Head of caudate nucleus (tissue), 42 donors: ENCODE measurements at regions of chr5 and their contacts with region 1.

Region 1: DNA sequence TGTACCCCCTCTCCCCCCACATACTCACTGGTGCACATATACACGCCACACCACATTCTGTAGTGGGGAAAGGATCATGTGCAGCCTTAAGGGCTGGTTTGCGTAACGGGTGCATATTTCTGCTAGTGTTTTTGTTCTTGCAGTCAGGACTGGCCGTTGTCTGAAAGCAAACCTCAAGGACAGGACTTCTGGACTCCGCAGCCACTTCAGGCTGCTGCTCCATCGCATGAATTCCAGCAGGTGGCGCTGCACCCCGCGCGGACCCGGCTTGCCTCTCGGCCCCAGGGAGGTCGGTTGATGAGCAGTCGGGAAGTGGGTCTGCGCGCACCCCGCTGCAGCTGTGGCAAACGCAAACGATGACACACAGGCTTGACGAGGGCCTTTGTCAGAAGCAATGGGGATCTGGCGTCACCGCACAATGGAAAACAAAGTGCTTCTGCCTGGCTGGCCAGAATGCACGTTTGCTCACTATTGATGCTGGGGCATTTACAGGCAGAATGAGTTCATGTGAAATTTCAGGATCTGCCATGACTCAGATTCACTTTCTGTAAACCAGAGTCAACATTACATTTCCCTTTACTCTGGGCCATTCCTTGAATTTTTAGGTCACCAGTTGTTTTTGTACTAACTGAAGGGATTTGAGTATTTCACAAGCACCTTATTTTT is 36.3 kb upstream of the GLRX start:
- DNase-seq: peak; percentile 88 to 98 (median 95)

Region 2: DNA sequence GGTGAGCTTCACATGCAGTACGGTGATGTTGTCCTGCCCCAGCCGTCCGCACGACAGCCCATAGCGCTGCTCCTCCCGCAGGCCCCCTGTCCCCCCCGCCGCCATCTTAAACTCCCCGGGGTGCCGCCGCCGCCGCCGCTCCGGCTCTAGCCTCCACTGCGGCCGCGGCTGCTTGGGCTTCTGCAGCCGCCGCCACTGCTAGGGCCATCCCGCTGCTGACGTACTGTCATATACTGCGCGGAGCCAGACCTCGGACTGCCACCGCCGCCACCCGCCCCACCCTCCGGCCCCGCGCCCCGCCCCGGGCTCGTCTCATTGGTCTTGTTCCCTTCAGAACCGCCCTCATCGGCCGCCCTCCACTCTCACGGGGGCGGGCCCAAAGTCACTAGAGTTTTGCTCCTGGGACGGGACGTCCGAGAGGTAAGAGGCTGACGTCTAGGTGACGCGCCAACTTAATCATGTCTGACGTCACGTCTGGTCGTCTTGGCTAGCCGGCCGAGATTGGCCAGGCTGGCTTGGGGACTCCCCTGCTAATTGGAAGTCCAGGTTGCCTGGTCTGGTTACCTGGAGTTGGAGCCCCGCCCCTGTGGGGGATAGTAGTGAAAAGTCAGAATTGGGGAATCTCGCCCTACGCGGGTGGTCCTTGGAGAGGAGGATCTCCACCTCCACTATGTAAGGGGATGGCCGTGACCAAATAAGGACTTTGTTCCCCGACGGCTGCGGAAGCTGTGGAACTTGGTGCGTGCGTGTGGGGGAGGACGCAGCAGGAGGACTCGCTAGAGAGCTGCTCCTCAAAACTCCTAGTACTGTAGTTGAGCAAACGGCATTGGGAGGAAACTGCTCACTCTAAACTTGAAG is 103.1 kb after region 1 on chr5 and contains the start of gene ELL2:
- intact Hi-C with region 1: loop called (anchors 2 kb)
- DNase-seq: peak; percentile 88 to 98 (median 96)

Region 3: DNA sequence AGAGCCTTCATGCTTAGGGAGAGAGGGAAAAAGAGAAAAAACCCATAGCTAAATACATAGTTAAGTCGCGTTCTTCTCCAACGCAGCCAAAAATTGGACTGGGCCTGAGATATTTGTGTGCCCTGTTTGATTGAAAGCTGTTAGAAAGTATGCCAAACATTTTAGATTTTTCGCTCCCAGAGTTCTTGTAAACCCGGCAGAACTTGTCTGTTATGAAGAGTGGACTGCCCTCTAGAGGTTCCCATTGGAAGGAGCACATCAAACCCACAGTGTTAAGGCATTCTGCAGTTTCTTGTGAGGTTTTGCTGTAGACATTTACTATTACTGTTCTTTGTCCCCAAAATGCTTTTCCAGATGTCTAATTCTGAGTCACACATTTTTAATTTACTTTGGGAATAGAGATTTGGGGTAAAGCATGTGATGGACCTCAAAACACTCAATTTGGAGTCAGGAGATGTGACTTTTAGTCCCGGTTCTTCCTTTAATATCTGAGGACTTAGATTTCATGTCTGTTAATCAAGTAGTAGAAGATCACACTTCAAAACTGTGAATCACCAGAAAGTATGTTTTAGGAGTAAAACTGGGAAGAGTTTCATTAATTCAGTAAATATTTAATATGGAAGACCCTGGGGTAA is 477.7 kb after region 1 on chr5:
- intact Hi-C with region 1: loop called (anchors 2 kb)
- DNase-seq: peak in 39 of 42 donors; percentile 17 to 91 (median 76)